Activated B cell treated with CpG ODN at 0.5 μM for 24 hours (primary cell): ENCODE measurements at regions of chr12 and their contacts with region 1.

Region 1: GRCh38 chr12:55926738-55927587 is 731 bp downstream of the PYM1 start:
- DNase-seq: peak; percentile 84
- ATAC-seq: peak; percentile 48
- H3K4me3 Mint-ChIP-seq: peak overlapping the region; percentile 98
- H3K27ac Mint-ChIP-seq: peak overlapping the region; percentile 98
- H3K4me1 Mint-ChIP-seq: peaks cover 67% of the 10 kb centered on the region
- H3K27me3 Mint-ChIP-seq: no peaks in the 10 kb centered on the region
- CTCF ChIP-seq: peak; percentile 50

Region 2: DNA sequence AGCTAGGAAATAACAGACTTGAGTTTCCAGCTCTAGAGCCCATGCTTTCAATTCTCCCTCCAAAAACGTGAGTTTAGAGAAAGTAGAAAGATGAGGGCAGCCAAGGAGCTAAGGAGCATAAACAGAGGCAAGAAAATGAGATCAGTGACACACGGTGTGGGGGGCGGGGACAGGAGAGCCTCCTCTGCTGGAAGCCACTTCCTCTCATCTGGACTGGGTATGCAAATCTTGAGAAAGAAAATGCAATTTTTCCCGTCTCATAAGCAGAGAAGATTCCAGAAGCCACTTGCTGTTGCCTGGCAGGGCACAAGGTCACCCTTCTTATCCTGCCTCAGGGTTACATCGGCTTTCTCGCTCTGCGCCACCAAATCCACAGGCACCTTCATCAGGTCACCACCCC is 284.3 kb before region 1 on chr12:
- CTCF ChIA-PET with region 1: no interaction called
- POLR2A ChIA-PET with region 1: no interaction called
- intact Hi-C with region 1: loop called (anchors 1 kb)
- DNase-seq: no peak
- ATAC-seq: no peak
- H3K4me3 Mint-ChIP-seq: peak overlapping the region; percentile 55
- H3K27ac Mint-ChIP-seq: peak overlapping the region; percentile 68
- H3K4me1 Mint-ChIP-seq: peaks cover 40% of the 10 kb centered on the region
- H3K27me3 Mint-ChIP-seq: peaks cover 2% of the 10 kb centered on the region
- CTCF ChIP-seq: no peak

Region 3: GRCh38 chr12:55817346-55818139 is 109.4 kb before region 1 on chr12 and contains the starts of genes ORMDL2 and SARNP:
- CTCF ChIA-PET with region 1: interaction called, 10 read pairs
- POLR2A ChIA-PET with region 1: interaction called, 69 read pairs
- intact Hi-C with region 1: loop called (anchors 1 kb)
- DNase-seq: peak; percentile 80
- ATAC-seq: peak; percentile 94
- H3K4me3 Mint-ChIP-seq: no peak within 1 kb of the TSS
- H3K27ac Mint-ChIP-seq: no peak within 1 kb of the TSS
- H3K4me1 Mint-ChIP-seq: peaks cover 21% of the 10 kb centered on the region
- H3K27me3 Mint-ChIP-seq: no peaks in the 10 kb centered on the region
- CTCF ChIP-seq: no peak
- total RNA-seq, gene ORMDL2: 68.0 and 70.9 TPM in 2 replicates
- total RNA-seq, gene SARNP: 53.6 and 58.7 TPM in 2 replicates

Region 4: DNA sequence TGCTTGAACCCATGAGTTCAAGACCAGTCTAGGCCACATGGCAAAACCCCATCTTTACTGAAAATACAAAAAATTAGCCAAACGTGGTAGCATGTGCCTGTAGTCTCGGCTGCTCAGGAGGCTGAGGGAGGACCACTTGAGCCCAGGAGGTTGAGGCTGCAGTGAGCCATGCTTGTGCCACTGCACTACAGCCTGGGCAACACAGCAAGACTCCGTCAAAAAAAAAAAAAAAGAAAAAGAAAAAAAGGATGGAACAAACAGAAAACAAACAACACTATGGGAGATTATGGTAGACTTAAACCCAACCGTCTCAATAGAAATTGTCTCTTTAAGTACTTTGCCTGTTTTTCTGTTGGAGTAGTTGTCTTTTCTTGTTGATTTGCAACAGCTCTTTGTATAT is 35.7 kb before region 1 on chr12:
- CTCF ChIA-PET with region 1: no interaction called
- POLR2A ChIA-PET with region 1: no interaction called
- intact Hi-C with region 1: no loop called
- DNase-seq: no peak
- ATAC-seq: no peak
- H3K4me3 Mint-ChIP-seq: no peak overlapping the region
- H3K27ac Mint-ChIP-seq: no peak overlapping the region
- H3K4me1 Mint-ChIP-seq: no peaks in the 10 kb centered on the region
- H3K27me3 Mint-ChIP-seq: no peaks in the 10 kb centered on the region
- CTCF ChIP-seq: no peak

Region 5: GRCh38 chr12:55940065-55940732 is 13.2 kb after region 1 on chr12:
- CTCF ChIA-PET with region 1: interaction called, 43 read pairs
- POLR2A ChIA-PET with region 1: interaction called, 50 read pairs
- intact Hi-C with region 1: loop called (anchors 1 kb)
- DNase-seq: peak; percentile 63
- ATAC-seq: peak; percentile 99
- H3K4me3 Mint-ChIP-seq: no peak overlapping the region
- H3K27ac Mint-ChIP-seq: peak overlapping the region; percentile 47
- H3K4me1 Mint-ChIP-seq: peaks cover 12% of the 10 kb centered on the region
- H3K27me3 Mint-ChIP-seq: no peaks in the 10 kb centered on the region
- CTCF ChIP-seq: peak; percentile 63

Region 6: DNA sequence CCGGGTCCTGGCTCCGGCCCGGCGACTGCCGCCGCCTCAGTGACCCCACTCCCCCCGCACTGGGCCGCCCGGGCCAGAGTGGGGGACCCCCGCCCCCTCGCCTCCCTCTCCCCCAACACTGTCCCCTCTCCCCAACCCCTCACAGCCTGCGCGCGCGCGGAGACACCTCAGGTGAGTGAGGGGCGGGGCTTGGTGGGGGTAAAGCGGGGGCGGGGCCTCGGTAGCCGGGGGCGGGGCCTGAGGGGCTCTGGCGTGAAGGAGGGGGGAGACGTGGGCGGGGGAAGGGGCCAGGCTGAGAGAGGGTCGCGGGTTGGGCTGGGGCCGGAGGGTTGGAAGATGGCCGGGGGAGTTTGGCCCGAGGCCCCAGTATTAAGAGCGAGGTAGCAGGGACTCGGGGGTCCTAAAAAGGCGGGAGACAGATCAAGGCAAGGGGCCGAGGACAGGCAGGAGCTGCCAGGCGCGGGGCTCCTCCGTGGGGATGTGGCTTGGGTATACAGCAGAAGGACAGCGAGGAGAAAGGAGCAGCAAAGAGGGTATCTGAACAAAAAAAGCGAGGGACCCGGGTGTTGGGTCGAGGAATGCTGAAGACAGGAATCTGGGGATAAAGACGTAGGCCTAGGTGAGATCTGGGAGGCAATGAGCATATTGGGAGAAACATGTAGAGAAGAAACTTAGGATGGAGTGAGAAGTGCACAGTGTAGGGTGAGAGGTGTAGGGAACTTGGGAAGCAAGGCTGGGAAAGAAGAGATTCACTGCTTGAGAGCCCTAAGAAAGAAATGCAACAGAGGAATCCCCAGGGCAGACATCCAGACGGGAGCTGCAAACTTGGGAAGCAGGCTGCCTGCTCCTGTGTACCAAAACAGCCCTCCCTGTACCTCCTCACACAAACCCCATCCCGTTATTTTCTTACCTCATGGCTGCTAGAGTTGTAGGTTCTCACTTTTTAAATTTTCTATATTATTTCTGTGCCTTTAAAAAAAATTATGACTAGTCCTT is 80.9 kb after region 1 on chr12:
- CTCF ChIA-PET with region 1: interaction called, 3 read pairs
- POLR2A ChIA-PET with region 1: interaction called, 4 read pairs
- intact Hi-C with region 1: loop called (anchors 2 kb)
- DNase-seq: peak; percentile 71
- ATAC-seq: peak; percentile 92
- H3K4me3 Mint-ChIP-seq: peak overlapping the region; percentile 88
- H3K27ac Mint-ChIP-seq: peak overlapping the region; percentile 79
- H3K4me1 Mint-ChIP-seq: peaks cover 9% of the 10 kb centered on the region
- H3K27me3 Mint-ChIP-seq: no peaks in the 10 kb centered on the region
- CTCF ChIP-seq: no peak

Region 7: GRCh38 chr12:56104109-56104814 is 177.3 kb after region 1 on chr12 and contains the start of gene PA2G4:
- CTCF ChIA-PET with region 1: interaction called, 4 read pairs
- POLR2A ChIA-PET with region 1: no interaction called
- intact Hi-C with region 1: loop called (anchors 5 kb)
- DNase-seq: peak; percentile 92
- ATAC-seq: peak; percentile 91
- H3K4me3 Mint-ChIP-seq: peak within 1 kb of the TSS; percentile 98
- H3K27ac Mint-ChIP-seq: peak within 1 kb of the TSS; percentile 93
- H3K4me1 Mint-ChIP-seq: peaks cover 33% of the 10 kb centered on the region
- H3K27me3 Mint-ChIP-seq: no peaks in the 10 kb centered on the region
- CTCF ChIP-seq: no peak
- total RNA-seq, gene PA2G4: 137 and 155 TPM in 2 replicates

Region 8: GRCh38 chr12:56260380-56260779 is 333.4 kb after region 1 on chr12:
- CTCF ChIA-PET with region 1: no interaction called
- POLR2A ChIA-PET with region 1: no interaction called
- intact Hi-C with region 1: no loop called
- DNase-seq: no peak
- ATAC-seq: no peak
- H3K4me3 Mint-ChIP-seq: no peak overlapping the region
- H3K27ac Mint-ChIP-seq: no peak overlapping the region
- H3K4me1 Mint-ChIP-seq: peaks cover 21% of the 10 kb centered on the region
- H3K27me3 Mint-ChIP-seq: no peaks in the 10 kb centered on the region
- CTCF ChIP-seq: no peak

Region 9: DNA sequence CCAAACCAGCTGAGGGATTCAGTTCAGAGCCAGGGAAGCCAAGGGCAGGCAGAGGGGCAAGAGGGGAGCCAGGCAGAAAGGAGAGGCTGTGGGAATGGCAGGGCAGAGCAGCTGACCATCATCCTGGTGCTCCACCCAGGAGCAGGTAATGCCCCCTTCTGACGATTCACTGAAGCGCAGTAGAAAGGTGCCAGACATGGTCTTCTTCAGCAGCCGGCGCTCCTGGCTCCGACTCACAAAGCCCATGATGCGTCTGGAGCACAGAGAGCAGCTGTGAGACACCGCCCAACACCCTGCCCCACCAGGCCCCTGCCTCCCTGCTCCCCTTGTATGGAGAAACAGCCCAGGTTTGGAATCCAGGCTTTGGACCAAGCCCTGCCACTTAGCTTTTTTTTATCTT is 419.7 kb after region 1 on chr12:
- CTCF ChIA-PET with region 1: no interaction called
- POLR2A ChIA-PET with region 1: interaction called, 10 read pairs
- intact Hi-C with region 1: no loop called
- DNase-seq: no peak
- ATAC-seq: no peak
- H3K4me3 Mint-ChIP-seq: no peak overlapping the region
- H3K27ac Mint-ChIP-seq: no peak overlapping the region
- H3K4me1 Mint-ChIP-seq: no peaks in the 10 kb centered on the region
- H3K27me3 Mint-ChIP-seq: no peaks in the 10 kb centered on the region
- CTCF ChIP-seq: no peak

Region 10: GRCh38 chr12:56387152-56387736 is 460.3 kb after region 1 on chr12:
- CTCF ChIA-PET with region 1: no interaction called
- POLR2A ChIA-PET with region 1: no interaction called
- intact Hi-C with region 1: no loop called
- DNase-seq: no peak
- ATAC-seq: no peak
- H3K4me3 Mint-ChIP-seq: no peak overlapping the region
- H3K27ac Mint-ChIP-seq: no peak overlapping the region
- H3K4me1 Mint-ChIP-seq: no peaks in the 10 kb centered on the region
- H3K27me3 Mint-ChIP-seq: no peaks in the 10 kb centered on the region
- CTCF ChIP-seq: no peak